Activated T-helper 1 cell treated with anti-CD3 and anti-CD28 coated beads, Interleukin-12 subunit alpha, Interleukin-12 subunit beta, Interleukin-2, Interleukin-4 antibody, amounts not matched to agents 30 ng/mL and 10 ng/mL and 1 ng/mL, durations not matched to agents 14 hours and 24 hours and 36 hours (primary cell): ENCODE measurements at regions of chr7 and their contacts with region 1.

Region 1: GRCh38 chr7:147245292-147245691 is 1128.7 kb downstream of the CNTNAP2 start:
- DNase-seq: no peak
- H3K4me3 Mint-ChIP-seq: no peak overlapping the region
- H3K27ac Mint-ChIP-seq: no peak overlapping the region
- H3K4me1 Mint-ChIP-seq: no peaks in the 10 kb centered on the region
- H3K27me3 Mint-ChIP-seq: no peaks in the 10 kb centered on the region

Region 2: GRCh38 chr7:147261693-147262092 is 16.4 kb after region 1 on chr7:
- intact Hi-C with region 1: loop called (anchors 2 kb)
- DNase-seq: no peak
- H3K4me3 Mint-ChIP-seq: no peak overlapping the region
- H3K27ac Mint-ChIP-seq: no peak overlapping the region
- H3K4me1 Mint-ChIP-seq: no peaks in the 10 kb centered on the region
- H3K27me3 Mint-ChIP-seq: no peaks in the 10 kb centered on the region

Region 3: GRCh38 chr7:148084138-148084537 is 838.8 kb after region 1 on chr7:
- intact Hi-C with region 1: loop called (anchors 5 kb)
- DNase-seq: no peak
- H3K4me3 Mint-ChIP-seq: no peak overlapping the region
- H3K27ac Mint-ChIP-seq: no peak overlapping the region
- H3K4me1 Mint-ChIP-seq: no peaks in the 10 kb centered on the region
- H3K27me3 Mint-ChIP-seq: peaks cover 2% of the 10 kb centered on the region

Region 4: GRCh38 chr7:148142660-148143248 is 897.5 kb after region 1 on chr7:
- intact Hi-C with region 1: loop called (anchors 2 kb)
- DNase-seq: no peak
- H3K4me3 Mint-ChIP-seq: no peak overlapping the region
- H3K27ac Mint-ChIP-seq: no peak overlapping the region
- H3K4me1 Mint-ChIP-seq: no peaks in the 10 kb centered on the region
- H3K27me3 Mint-ChIP-seq: no peaks in the 10 kb centered on the region